Gastrocnemius medialis (tissue), 4 donors: ENCODE measurements at regions of chr17 and their contacts with region 1.

Region 1: DNA sequence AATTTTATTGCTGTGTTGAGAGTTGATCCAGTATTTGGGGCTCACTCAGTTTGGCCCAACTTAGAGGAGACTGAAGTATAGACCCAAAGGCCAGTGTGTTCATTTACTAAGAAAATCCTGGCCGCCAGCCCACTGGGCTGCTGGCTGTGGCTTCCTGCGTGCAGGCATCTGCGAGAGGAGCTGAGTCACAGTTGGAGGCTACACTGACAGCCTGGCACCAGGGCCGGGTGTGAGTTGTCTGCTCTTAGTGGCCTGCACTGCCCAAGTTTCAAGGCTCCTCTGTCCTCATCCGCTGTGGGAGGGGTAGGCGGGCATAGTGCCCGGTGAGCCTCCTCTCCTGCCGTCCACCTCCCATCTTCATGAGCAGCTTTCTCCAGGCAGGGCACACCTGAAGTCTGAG is 54.2 kb downstream of the PLD6 start:
- DNase-seq: peak; percentile 92 to 97
- ATAC-seq: peak; percentile 88 to 90
- H3K4me3 ChIP-seq: no peak overlapping the region
- H3K27ac ChIP-seq: peak overlapping the region; percentile 89 to 95 (median 92)
- H3K4me1 ChIP-seq: peaks cover 54 to 66% of the 10 kb centered on the region in 2 donors
- H3K27me3 ChIP-seq: no peaks in the 10 kb centered on the region
- CTCF ChIP-seq: no peak
- POLR2A ChIP-seq: no peak

Region 2: DNA sequence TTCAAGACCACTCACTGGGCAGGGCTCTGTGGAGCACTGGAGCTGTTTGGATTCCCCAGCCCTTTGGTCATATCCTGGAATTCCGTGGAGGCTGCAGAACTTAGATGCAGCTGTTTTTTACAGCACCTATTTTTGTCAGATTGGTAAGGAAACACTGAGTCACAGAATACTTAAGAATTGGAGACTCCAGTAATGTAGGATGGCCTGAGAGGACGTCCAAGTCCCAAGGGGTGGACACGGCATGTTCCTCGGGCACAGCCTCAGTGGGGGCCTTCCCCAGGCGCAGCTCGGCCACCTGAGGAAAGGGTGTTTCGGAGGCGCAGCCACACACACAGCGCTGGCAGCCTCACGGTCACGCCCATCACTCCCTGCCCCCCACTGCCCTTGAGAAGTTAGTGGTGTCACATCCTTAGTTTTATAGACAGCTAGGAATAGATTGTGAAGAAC is 39.4 kb after region 1 on chr17:
- in situ Hi-C with region 1: no loop called
- intact Hi-C with region 1: loop called (anchors 2 kb)
- DNase-seq: peak; percentile 77 to 84
- ATAC-seq: peak; percentile 87 to 91
- H3K4me3 ChIP-seq: peak overlapping the region in 3 of 4 donors; percentile 1 to 14 (median 13)
- H3K27ac ChIP-seq: peak overlapping the region; percentile 71 to 91 (median 82)
- H3K4me1 ChIP-seq: peaks cover 27 to 31% of the 10 kb centered on the region in 2 donors
- H3K27me3 ChIP-seq: no peaks in the 10 kb centered on the region
- CTCF ChIP-seq: no peak
- POLR2A ChIP-seq: peak in 1 of 2 donors; percentile 36

Region 3: GRCh38 chr17:17280613-17281549 is 128.9 kb after region 1 on chr17 and contains the start of gene COPS3:
- in situ Hi-C with region 1: no loop called
- intact Hi-C with region 1: loop called (anchors 5 kb)
- DNase-seq: peak; percentile 98 to 99
- ATAC-seq: peak; percentile 95
- H3K4me3 ChIP-seq: peak within 1 kb of the TSS; percentile 88 to 99 (median 92)
- H3K27ac ChIP-seq: peak within 1 kb of the TSS; percentile 97 to 100 (median 100)
- H3K4me1 ChIP-seq: peaks cover 39 to 41% of the 10 kb centered on the region in 2 donors
- H3K27me3 ChIP-seq: no peaks in the 10 kb centered on the region
- CTCF ChIP-seq: no peak
- POLR2A ChIP-seq: peak; percentile 90 to 91
- total RNA-seq, gene COPS3: 145 to 249 (median 175) TPM